Activated naive CD4-positive, alpha-beta T cell treated with anti-CD3 and anti-CD28 coated beads for 36 hours (primary cell): ENCODE measurements at regions of chr3 and their contacts with region 1.

Region 1: DNA sequence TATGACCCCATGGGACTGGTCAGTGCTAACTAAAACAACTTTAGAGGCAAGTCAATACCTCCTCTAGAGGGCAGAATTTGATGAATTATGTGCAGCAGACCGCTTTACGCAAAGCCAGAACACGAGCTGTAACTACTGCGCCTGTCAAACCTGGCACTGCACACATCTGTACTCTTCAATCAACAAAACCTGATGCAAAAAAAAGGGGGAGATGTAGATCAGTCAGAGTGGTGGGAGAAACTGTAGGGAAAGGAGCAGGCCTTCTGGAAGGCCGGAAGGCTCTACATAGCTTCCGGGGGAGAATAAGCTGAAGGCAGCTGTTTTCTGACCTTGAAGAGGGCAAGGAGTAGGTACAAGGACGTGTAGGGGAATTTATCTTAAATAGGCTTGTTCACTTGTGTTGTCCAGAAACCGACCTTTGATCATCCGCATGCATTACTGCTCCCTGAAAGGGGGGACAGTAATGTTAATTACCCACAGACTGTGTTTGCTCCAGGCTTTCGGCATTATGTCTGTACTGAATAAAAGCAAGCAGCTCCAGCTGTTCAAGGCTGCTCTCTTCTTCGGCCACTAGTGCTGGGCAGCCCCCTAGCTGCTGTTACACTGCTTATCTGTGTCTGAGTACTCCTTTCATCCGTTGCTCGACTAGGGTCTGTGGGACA is 41.0 kb downstream of the GPR160 start:
- DNase-seq: no peak
- H3K4me3 Mint-ChIP-seq: no peak overlapping the region
- H3K27ac Mint-ChIP-seq: no peak overlapping the region
- H3K4me1 Mint-ChIP-seq: peaks cover 8% of the 10 kb centered on the region
- H3K27me3 Mint-ChIP-seq: no peaks in the 10 kb centered on the region

Region 2: GRCh38 chr3:170368921-170369320 is 290.2 kb after region 1 on chr3:
- CTCF ChIA-PET with region 1: no interaction called
- intact Hi-C with region 1: loop called (anchors 5 kb)
- DNase-seq: no peak
- H3K4me3 Mint-ChIP-seq: no peak overlapping the region
- H3K27ac Mint-ChIP-seq: no peak overlapping the region
- H3K4me1 Mint-ChIP-seq: peaks cover 26% of the 10 kb centered on the region
- H3K27me3 Mint-ChIP-seq: no peaks in the 10 kb centered on the region